GM13976 (cell line): ENCODE measurements at regions of chr6 and their contacts with region 1.

Region 1: GRCh38 chr6:113858480-113859348 is 1.6 kb downstream of the MARCKS start:
- DNase-seq: peak; percentile 96
- CTCF ChIP-seq: peak; percentile 92

Region 2: GRCh38 chr6:113512576-113512975 is 346.1 kb before region 1 on chr6:
- in situ Hi-C with region 1: no loop called
- DNase-seq: no peak
- CTCF ChIP-seq: no peak

Region 3: DNA sequence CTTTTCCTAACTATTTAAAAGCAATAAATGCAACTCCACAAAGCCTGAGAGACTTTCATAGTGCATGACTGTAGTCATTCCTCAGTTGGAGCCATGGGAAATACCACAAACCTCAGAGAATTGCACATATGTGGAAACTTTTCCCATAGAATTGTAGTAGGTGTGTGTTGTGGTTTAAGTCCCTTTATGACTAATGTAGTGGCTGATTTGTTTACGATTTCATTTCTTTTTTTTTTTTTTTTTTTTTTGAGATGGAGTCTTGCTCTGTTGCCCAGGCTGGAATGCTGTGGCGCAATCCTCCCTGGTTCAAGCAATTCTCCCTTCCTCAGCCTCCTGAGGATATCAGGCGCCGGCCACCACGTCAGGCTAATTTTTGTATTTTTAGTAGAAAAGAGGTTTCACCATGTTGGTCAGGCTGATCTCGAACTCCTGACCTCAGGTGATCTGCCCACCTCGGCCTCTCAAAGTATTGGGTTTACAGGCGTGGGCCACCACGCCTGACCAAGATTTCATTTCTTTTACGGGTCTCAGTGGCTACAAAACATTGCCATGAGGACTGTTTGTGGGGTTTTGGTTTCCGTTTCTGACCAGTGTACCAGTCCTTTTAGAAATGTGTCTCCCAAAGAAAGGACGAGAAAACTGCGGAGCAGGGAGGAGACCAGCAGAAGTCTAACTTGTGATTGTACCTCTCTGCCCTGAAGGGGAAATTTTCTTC is 213.7 kb before region 1 on chr6:
- in situ Hi-C with region 1: loop called (anchors 5 kb)
- DNase-seq: no peak
- CTCF ChIP-seq: no peak

Region 4: DNA sequence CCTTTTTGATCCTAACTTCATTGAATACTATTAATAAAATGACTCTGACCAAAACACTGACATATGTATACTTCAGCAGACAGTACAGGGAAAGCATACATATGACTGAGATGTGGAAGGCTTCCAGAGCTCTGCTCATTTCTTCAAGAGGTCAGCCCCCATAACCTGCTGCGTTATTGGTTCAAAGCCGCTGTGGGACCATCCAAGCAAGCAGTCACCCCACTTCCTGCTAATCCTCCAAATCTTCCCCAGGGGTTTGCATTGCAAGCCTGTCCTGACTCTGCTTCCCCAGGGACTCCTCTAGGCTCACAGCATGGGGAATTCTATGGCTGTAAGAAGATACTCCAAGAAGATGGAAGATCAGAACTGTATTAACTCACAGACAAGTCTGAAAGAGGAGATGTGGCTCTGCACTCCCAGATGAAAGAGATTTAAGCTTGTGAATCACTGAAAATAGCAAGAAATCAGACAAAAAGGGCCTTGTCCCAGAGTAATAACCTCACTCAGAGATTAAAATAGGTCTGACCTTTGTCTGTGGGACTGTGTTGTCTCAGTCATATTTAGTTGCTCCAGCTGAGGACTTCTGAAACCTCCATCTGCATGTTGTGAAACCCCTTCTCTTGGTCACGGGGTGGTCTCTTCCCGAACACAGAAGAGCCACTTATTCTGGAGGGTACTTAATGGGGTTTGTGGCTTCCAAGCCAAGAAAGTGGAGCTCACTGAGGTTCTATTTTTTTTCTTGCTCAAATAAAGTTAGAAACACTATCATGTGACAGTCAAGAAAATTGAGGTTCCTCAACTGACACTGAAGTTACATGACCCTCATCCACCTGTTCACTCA is 103.0 kb before region 1 on chr6:
- in situ Hi-C with region 1: loop called (anchors 10 kb)
- DNase-seq: peak; percentile 62
- CTCF ChIP-seq: no peak